Left cardiac atrium (tissue), 4 donors: ENCODE measurements at regions of chr11 and their contacts with region 1.

Region 1: GRCh38 chr11:3126207-3126862 is 38.8 kb downstream of the OSBPL5 start:
- DNase-seq: peak; percentile 75
- ATAC-seq: no peak

Region 2: GRCh38 chr11:3091791-3092602 is 34.3 kb before region 1 on chr11:
- intact Hi-C with region 1: no loop called
- DNase-seq: peak; percentile 68
- ATAC-seq: peak; percentile 69 to 72

Region 3: DNA sequence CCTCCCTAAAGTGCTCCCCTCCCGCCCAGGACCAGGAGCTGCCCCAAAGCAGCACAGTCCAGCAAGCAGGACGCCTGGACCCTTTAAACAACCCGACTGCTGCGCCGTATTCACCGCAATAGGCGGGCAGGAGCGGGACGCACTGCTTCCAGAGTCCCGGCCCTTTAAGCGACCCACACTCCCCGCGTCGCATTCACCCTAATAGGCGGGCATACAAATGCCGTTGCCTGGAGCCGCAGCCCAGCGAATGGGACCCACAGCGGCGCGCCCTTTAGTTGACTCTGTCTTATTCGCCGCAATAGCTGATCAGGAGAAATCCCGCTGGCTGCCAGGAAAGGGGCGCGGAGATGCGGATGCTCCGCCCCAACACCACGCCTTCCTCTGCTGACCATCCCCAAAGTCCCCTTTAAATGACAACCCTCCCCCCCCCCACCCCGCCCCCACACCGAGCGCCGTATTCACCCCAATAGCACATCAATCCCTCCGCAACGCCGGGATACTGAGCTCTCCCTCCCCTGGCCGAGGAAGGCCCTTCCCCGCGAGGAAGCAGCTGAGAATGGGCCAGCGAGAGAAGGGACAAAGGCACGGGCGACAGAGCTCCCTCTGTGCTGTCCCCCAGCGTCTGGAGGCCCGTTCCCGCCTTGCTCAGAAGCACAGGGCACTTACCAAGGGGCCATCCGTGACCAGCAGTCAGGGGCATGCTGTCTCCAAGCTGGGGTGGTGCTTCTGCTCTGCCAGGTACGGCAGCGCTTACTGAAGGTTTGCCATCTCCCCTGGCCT is 34.1 kb after region 1 on chr11:
- intact Hi-C with region 1: loop called in 1 of 2 experiments (anchors 5 kb)
- DNase-seq: peak; percentile 92
- ATAC-seq: peak; percentile 81 to 84